Aorta (tissue), 5 donors: ENCODE measurements at regions of chr5 and their contacts with region 1.

Region 1: GRCh38 chr5:15695215-15695731 is 195.3 kb downstream of the FBXL7 start:
- DNase-seq: no peak
- ATAC-seq: no peak
- H3K4me3 ChIP-seq: no peak overlapping the region
- H3K27ac ChIP-seq: peak overlapping the region; percentile 82 to 89
- H3K4me1 ChIP-seq: peaks cover 0 to 20% of the 10 kb centered on the region in 2 donors
- H3K27me3 ChIP-seq: no peaks in the 10 kb centered on the region

Region 2: DNA sequence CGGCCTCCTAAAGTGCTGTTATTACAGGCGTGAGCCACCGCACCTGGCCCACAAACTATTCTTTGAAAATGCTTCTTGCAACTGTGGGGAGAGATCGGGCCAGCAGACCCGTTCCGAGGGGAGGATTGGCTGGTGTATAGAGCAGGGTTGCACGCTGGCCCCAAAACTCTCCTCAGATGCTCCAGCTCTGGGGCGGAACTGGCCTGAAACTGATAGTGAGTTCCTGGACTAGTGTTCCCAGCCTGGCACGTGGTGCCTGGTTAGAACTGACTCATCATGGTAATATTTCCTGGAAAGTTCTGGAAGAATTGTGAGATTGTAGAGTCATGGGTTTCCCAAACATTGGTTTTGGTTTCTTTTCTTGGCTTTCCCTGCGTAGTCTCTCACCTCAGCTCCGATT is 74.8 kb before region 1 on chr5:
- intact Hi-C with region 1: loop called in 1 of 2 experiments (anchors 10 kb)
- DNase-seq: peak; percentile 77 to 85
- ATAC-seq: peak; percentile 83
- H3K4me3 ChIP-seq: peak overlapping the region in 1 of 2 donors; percentile 38
- H3K27ac ChIP-seq: peak overlapping the region; percentile 69 to 94
- H3K4me1 ChIP-seq: peaks cover 4 to 10% of the 10 kb centered on the region in 2 donors
- H3K27me3 ChIP-seq: no peaks in the 10 kb centered on the region